PC-9 (cell line): ENCODE measurements at regions of chr19 and their contacts with region 1.

Region 1: GRCh38 chr19:52993323-52994178 is 20.2 kb upstream of the ERVV-1 start:
- DNase-seq: peak; percentile 77 to 91
- H3K4me3 ChIP-seq: peak overlapping the region; percentile 50
- H3K27ac ChIP-seq: peak overlapping the region; percentile 36
- H3K4me1 ChIP-seq: peaks cover 25% of the 10 kb centered on the region; the same call in 1 of the 2 replicates
- H3K27me3 ChIP-seq: no peaks in the 10 kb centered on the region
- CTCF ChIP-seq: peak; percentile 87

Region 2: GRCh38 chr19:52922841-52923777 is 70.4 kb before region 1 on chr19 and contains the start of gene ZNF888:
- CTCF ChIA-PET with region 1: no interaction called
- POLR2A ChIA-PET with region 1: no interaction called
- intact Hi-C with region 1: loop called (anchors 2 kb)
- DNase-seq: peak; percentile 75 to 91
- H3K4me3 ChIP-seq: peak within 1 kb of the TSS; percentile 96
- H3K27ac ChIP-seq: peak within 1 kb of the TSS; percentile 82
- H3K4me1 ChIP-seq: 0 out of 2 replicates have a peak, but pooled peaks cover 6% of the 10 kb centered on the region
- H3K27me3 ChIP-seq: no peaks in the 10 kb centered on the region
- CTCF ChIP-seq: no peak
- total RNA-seq, gene ZNF888: 10.8 and 14.5 TPM in 2 replicates

Region 3: DNA sequence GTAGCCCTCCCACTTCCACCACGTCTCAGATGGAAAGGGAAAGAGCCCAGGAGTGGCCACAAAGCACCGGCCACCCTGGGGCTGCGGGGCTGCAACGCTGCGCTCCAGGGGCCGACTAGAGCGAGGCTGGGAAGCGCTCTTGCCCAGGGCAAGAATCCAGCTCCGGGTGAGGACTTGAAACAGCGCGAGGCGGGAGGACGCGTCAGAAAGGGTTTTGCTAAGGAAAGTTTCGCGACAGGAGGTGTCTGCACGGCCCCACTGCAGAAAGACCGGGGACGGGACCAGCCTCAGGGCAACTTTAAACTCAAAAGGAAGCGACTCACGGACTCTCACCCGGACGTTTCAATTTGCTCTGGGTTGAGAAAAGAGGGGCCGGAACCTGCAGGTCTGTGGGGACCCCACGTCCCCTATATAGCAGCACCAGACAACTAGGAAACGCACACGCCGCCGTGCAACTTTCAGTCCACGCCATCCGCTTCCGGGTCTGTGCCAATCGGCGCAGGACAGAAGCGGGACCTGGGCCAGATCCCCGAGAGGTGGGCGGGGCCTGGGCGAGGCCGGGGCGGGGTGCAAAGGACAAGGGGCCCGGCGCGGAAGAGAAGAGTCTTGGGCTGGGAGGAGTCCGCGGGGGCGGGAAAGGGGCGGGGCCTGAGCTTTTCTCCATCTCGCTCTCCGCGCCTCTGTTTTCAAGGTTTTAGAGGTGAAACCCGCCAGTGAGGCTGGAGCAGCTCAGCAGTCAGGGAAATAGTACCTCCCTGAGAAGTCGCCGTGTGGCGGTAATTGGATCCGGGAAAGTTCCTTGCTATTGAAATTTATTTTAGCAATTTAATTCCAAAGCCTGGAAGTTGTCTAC is 30.9 kb before region 1 on chr19 and contains the start of gene ZNF816:
- CTCF ChIA-PET with region 1: no interaction called
- POLR2A ChIA-PET with region 1: no interaction called
- intact Hi-C with region 1: loop called (anchors 1 kb)
- DNase-seq: peak; percentile 89 to 99
- H3K4me3 ChIP-seq: peak within 1 kb of the TSS; percentile 83
- H3K27ac ChIP-seq: peak within 1 kb of the TSS; percentile 32
- H3K4me1 ChIP-seq: peaks cover 15% of the 10 kb centered on the region
- H3K27me3 ChIP-seq: no peaks in the 10 kb centered on the region
- CTCF ChIP-seq: no peak
- total RNA-seq, gene ZNF816: 11.8 and 13.8 TPM in 2 replicates

Region 4: DNA sequence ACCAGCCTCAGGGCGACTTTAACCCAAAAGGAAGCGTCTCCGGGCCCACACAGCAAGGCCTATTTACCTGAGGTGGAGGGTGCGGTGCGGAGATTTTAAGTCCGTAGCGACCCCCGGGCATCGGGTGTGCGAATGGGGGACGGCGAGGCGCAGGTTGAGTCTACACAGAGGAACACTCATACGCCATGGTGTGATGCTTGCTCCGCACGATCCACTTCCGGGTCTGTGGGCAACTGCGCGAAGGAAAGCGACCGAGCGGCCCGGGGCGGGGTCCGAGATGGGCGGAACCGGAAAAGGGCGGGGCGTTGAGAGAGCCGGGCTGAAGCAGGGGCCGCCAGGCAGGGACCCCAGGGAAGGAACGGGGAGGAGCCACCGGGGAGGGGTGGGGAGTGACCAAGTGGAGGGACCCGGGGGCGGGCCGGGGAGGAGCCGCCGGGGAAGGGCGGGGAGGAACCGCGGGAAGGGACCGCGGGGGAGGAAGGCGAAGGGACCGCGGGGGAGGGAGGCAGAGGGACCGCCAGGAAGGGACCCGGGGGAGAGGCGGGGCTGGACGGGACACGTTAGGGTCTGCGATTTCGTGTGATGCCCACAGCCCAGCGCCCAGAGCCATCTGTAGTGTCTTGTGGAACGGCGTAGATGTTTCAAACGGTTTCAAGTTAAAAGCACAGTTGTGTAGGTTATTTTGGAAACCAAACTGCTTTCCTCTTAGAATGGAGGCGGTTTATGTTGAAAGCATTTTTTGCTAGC is 109.8 kb after region 1 on chr19 and contains the start of gene ZNF160:
- CTCF ChIA-PET with region 1: no interaction called
- POLR2A ChIA-PET with region 1: no interaction called
- intact Hi-C with region 1: loop called (anchors 1 kb)
- DNase-seq: peak; percentile 92 to 99
- H3K4me3 ChIP-seq: peak within 1 kb of the TSS; percentile 94
- H3K27ac ChIP-seq: peak within 1 kb of the TSS; percentile 60
- H3K4me1 ChIP-seq: peaks cover 12% of the 10 kb centered on the region
- H3K27me3 ChIP-seq: no peaks in the 10 kb centered on the region
- CTCF ChIP-seq: no peak
- total RNA-seq, gene ZNF160: 25.1 and 27.4 TPM in 2 replicates

Region 5: DNA sequence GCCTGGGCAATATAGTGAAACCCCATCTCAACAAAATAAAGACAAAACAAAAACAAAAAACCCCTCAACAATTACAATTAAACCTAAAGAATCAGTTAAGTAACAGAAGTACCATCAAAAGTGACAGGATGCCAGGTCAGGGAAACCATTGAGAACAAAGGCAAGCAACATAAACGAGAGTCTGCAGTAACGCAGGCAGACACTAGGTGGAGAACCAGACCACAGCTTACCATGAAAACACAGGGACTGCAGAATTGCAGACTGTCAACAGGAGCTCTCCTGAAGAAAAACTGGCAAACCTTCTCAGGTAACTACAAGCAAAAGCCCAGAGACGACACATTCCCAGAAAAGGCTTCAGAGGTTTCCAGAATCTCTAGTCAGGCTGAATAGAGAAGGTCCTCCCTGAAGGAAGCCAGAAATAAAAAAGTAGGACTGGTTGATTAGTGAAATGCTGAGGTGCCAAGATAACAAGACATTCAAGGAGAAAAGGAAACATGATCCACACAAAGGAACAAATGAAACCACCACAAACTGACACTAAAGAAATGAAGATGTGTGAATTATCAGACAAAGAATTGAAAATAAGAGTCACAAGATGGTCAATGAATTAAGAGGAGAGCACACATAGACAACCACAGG is 201.8 kb after region 1 on chr19:
- CTCF ChIA-PET with region 1: no interaction called
- POLR2A ChIA-PET with region 1: no interaction called
- intact Hi-C with region 1: loop called (anchors 5 kb)
- DNase-seq: peak; percentile 74 to 76
- H3K4me3 ChIP-seq: no peak overlapping the region
- H3K27ac ChIP-seq: no peak overlapping the region
- H3K4me1 ChIP-seq: peaks cover 8% of the 10 kb centered on the region
- H3K27me3 ChIP-seq: no peaks in the 10 kb centered on the region
- CTCF ChIP-seq: peak; percentile 97